Activated B cell treated with CpG ODN at 0.5 μM for 24 hours (primary cell): ENCODE measurements at regions of chr1 and their contacts with region 1.

Region 1: GRCh38 chr1:180515864-180516388 is 13.5 kb upstream of the ACBD6 start:
- DNase-seq: no peak
- ATAC-seq: peak; percentile 89
- H3K4me3 Mint-ChIP-seq: no peak overlapping the region
- H3K27ac Mint-ChIP-seq: no peak overlapping the region
- H3K4me1 Mint-ChIP-seq: no peaks in the 10 kb centered on the region
- H3K27me3 Mint-ChIP-seq: peaks cover 8% of the 10 kb centered on the region
- CTCF ChIP-seq: no peak

Region 2: GRCh38 chr1:180229974-180230790 is 285.7 kb before region 1 on chr1 and contains the start of gene LHX4:
- CTCF ChIA-PET with region 1: no interaction called
- POLR2A ChIA-PET with region 1: interaction called, 11 read pairs
- intact Hi-C with region 1: no loop called
- DNase-seq: peak; percentile 26
- ATAC-seq: no peak
- H3K4me3 Mint-ChIP-seq: peak within 1 kb of the TSS; percentile 78
- H3K27ac Mint-ChIP-seq: no peak within 1 kb of the TSS
- H3K4me1 Mint-ChIP-seq: peaks cover 37% of the 10 kb centered on the region
- H3K27me3 Mint-ChIP-seq: peaks cover 50% of the 10 kb centered on the region
- CTCF ChIP-seq: no peak
- total RNA-seq, gene LHX4: not detected in 2 replicates

Region 3: DNA sequence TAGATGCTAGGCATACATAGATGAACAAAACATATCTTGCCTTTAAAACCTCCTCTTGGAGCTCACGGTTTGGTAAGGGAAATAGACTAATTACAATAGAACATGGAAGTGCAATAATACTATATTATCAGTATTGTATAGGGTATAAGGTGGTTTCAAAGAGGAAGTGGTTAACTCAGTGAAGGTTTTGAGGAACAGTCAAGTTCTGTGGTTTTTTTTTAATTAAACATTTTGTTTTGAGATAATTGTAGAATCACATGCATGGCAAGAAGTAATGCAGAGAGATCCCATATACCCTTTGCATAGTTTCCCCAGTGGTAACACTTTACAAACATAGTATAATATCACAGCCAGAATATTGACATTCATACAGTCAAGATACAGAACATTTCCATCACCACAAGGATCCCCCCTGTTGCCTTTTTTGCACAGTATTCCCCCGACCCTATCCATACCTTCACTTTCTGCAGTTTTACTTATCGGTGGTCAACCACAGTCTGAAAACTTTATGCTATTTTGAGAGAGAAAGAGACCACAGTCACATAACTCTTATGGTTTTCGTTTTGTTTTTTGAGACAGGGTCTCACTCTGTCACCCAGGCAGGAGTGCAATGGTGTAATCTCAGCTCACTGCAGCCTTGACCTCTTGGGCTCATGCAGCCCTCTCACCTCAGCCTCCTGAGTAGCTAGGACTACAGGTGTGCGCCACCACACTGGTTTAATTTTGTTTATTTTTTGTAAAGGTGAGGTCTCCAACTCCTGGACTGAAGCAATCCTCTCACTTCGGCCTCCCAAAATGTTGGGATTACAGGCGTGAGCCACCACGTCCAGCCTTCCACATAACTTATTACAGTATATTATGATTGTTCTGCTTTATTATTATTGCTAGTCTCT is 336.3 kb after region 1 on chr1:
- CTCF ChIA-PET with region 1: no interaction called
- POLR2A ChIA-PET with region 1: no interaction called
- intact Hi-C with region 1: loop called (anchors 2 kb)
- DNase-seq: no peak
- ATAC-seq: peak; percentile 37
- H3K4me3 Mint-ChIP-seq: peak overlapping the region; percentile 20
- H3K27ac Mint-ChIP-seq: no peak overlapping the region
- H3K4me1 Mint-ChIP-seq: peaks cover 31% of the 10 kb centered on the region
- H3K27me3 Mint-ChIP-seq: no peaks in the 10 kb centered on the region
- CTCF ChIP-seq: no peak

Region 4: GRCh38 chr1:180863158-180863775 is 347.3 kb after region 1 on chr1:
- CTCF ChIA-PET with region 1: interaction called, 157 read pairs
- POLR2A ChIA-PET with region 1: no interaction called
- intact Hi-C with region 1: loop called (anchors 1 kb)
- DNase-seq: no peak
- ATAC-seq: no peak
- H3K4me3 Mint-ChIP-seq: no peak overlapping the region
- H3K27ac Mint-ChIP-seq: no peak overlapping the region
- H3K4me1 Mint-ChIP-seq: no peaks in the 10 kb centered on the region
- H3K27me3 Mint-ChIP-seq: no peaks in the 10 kb centered on the region
- CTCF ChIP-seq: peak; percentile 92